ENCODE measurements at regions of chr17 and their contacts with region 1.

Region 1: GRCh38 chr17:28763804-28764266 is 20.0 kb downstream of the TRAF4 start:
- DNase-seq: peak; percentile 58 to 84 (median 76)
- ATAC-seq: peak; percentile 95
- H3K4me3 ChIP-seq: no peak overlapping the region
- H3K4me3 Mint-ChIP-seq: no peak overlapping the region
- H3K27ac ChIP-seq: no peak overlapping the region
- H3K27ac Mint-ChIP-seq: no peak overlapping the region
- H3K4me1 ChIP-seq: no peaks in the 10 kb centered on the region
- H3K4me1 Mint-ChIP-seq: peaks cover 6% of the 10 kb centered on the region
- H3K27me3 ChIP-seq: no peaks in the 10 kb centered on the region
- H3K27me3 Mint-ChIP-seq: no peaks in the 10 kb centered on the region
- CTCF ChIP-seq: peak; percentile 92

Region 2: GRCh38 chr17:28750178-28751047 is 13.4 kb before region 1 on chr17:
- CTCF ChIA-PET with region 1: interaction called, 66 read pairs
- POLR2A ChIA-PET with region 1: no interaction called
- intact Hi-C with region 1: no loop called
- DNase-seq: peak; percentile 69 to 93 (median 89)
- ATAC-seq: peak; percentile 93
- H3K4me3 ChIP-seq: no peak overlapping the region
- H3K4me3 Mint-ChIP-seq: no peak overlapping the region
- H3K27ac ChIP-seq: no peak overlapping the region
- H3K27ac Mint-ChIP-seq: no peak overlapping the region
- H3K4me1 ChIP-seq: peaks cover 15% of the 10 kb centered on the region
- H3K4me1 Mint-ChIP-seq: peaks cover 16% of the 10 kb centered on the region
- H3K27me3 ChIP-seq: no peaks in the 10 kb centered on the region
- H3K27me3 Mint-ChIP-seq: no peaks in the 10 kb centered on the region
- CTCF ChIP-seq: peak; percentile 99

Region 3: GRCh38 chr17:28842282-28843012 is 78.6 kb after region 1 on chr17 and contains the start of gene FAM222B:
- CTCF ChIA-PET with region 1: interaction called, 28 read pairs
- POLR2A ChIA-PET with region 1: interaction called, 3 read pairs
- intact Hi-C with region 1: loop called (anchors 1 to 2 kb)
- DNase-seq: peak; percentile 68 to 94 (median 83)
- ATAC-seq: peak; percentile 98
- H3K4me3 ChIP-seq: peak within 1 kb of the TSS; percentile 62 to 91
- H3K4me3 Mint-ChIP-seq: peak within 1 kb of the TSS; percentile 97
- H3K27ac ChIP-seq: peak within 1 kb of the TSS; percentile 65 to 79
- H3K27ac Mint-ChIP-seq: peak within 1 kb of the TSS; percentile 94
- H3K4me1 ChIP-seq: peaks cover 16% of the 10 kb centered on the region
- H3K4me1 Mint-ChIP-seq: peaks cover 25% of the 10 kb centered on the region
- H3K27me3 ChIP-seq: no peaks in the 10 kb centered on the region
- H3K27me3 Mint-ChIP-seq: no peaks in the 10 kb centered on the region
- CTCF ChIP-seq: no peak
- total RNA-seq, gene FAM222B: 20.2 to 20.6 TPM

Region 4: DNA sequence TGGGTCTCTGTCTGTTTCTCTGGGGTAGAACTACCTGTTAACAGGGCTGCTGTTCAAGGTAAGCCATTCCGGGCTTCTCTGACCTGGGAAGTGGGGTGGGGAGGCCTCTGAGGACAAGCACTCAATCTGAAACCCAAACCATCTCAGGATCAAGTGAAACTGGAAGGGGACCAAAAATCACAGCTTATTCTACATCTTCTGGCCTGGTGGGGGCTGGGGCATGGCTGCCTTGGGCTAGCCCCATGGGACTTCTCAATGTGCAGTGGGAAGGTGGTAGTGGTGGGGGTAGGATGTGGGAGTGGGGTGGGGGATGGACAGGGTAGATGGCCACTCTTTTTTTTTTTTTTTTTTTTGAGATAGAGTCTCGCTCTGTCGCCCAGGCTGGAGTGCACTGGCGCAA is 128.2 kb after region 1 on chr17:
- CTCF ChIA-PET with region 1: interaction called, 95 read pairs
- POLR2A ChIA-PET with region 1: no interaction called
- intact Hi-C with region 1: loop called in 1 of 2 experiments (anchors 5 kb)
- DNase-seq: no peak
- ATAC-seq: no peak
- H3K4me3 ChIP-seq: no peak overlapping the region
- H3K4me3 Mint-ChIP-seq: peak overlapping the region; percentile 54
- H3K27ac ChIP-seq: peak overlapping the region in 1 of 2 experiments; percentile 38
- H3K27ac Mint-ChIP-seq: peak overlapping the region; percentile 85
- H3K4me1 ChIP-seq: peaks cover 43% of the 10 kb centered on the region
- H3K4me1 Mint-ChIP-seq: peaks cover 60% of the 10 kb centered on the region
- H3K27me3 ChIP-seq: no peaks in the 10 kb centered on the region
- H3K27me3 Mint-ChIP-seq: no peaks in the 10 kb centered on the region
- CTCF ChIP-seq: no peak

Region 5: DNA sequence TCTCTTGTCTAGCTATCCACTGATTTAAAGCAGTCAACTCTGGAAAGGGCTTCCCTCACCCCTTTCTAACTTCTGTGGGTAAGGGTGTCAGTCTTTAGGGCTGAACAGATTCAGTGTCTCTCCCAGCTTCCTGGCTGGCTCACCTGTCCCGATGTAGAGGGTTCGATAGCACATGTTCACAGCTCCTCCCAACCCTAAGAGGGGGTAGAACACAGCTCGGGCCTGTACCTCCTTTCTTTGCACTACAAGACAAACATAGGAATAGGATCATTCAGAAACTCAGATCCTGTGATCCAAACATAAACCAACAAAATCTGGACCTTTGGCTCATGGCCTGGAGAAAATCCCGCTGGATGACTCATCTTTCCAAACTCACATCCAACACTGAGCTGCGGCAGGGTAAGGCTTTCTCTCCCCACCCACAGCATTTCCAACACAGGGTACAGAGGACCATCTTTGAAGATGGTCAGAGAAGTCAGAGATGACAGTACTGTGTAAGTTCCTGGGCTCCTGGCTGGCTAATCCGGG is 144.9 kb after region 1 on chr17:
- CTCF ChIA-PET with region 1: interaction called, 95 read pairs
- POLR2A ChIA-PET with region 1: no interaction called
- intact Hi-C with region 1: loop called in 1 of 2 experiments (anchors 1 kb)
- DNase-seq: no peak
- ATAC-seq: no peak
- H3K4me3 ChIP-seq: no peak overlapping the region
- H3K4me3 Mint-ChIP-seq: no peak overlapping the region
- H3K27ac ChIP-seq: no peak overlapping the region
- H3K27ac Mint-ChIP-seq: no peak overlapping the region
- H3K4me1 ChIP-seq: no peaks in the 10 kb centered on the region
- H3K4me1 Mint-ChIP-seq: peaks cover 1% of the 10 kb centered on the region
- H3K27me3 ChIP-seq: no peaks in the 10 kb centered on the region
- H3K27me3 Mint-ChIP-seq: no peaks in the 10 kb centered on the region
- CTCF ChIP-seq: no peak

Region 6: GRCh38 chr17:28937044-28937729 is 173.4 kb after region 1 on chr17:
- CTCF ChIA-PET with region 1: interaction called, 10 read pairs
- POLR2A ChIA-PET with region 1: interaction called, 3 read pairs
- intact Hi-C with region 1: no loop called
- DNase-seq: no peak
- ATAC-seq: no peak
- H3K4me3 ChIP-seq: no peak overlapping the region
- H3K4me3 Mint-ChIP-seq: no peak overlapping the region
- H3K27ac ChIP-seq: no peak overlapping the region
- H3K27ac Mint-ChIP-seq: peak overlapping the region; percentile 70
- H3K4me1 ChIP-seq: peaks cover 46% of the 10 kb centered on the region
- H3K4me1 Mint-ChIP-seq: peaks cover 87% of the 10 kb centered on the region
- H3K27me3 ChIP-seq: no peaks in the 10 kb centered on the region
- H3K27me3 Mint-ChIP-seq: no peaks in the 10 kb centered on the region
- CTCF ChIP-seq: no peak

Region 7: DNA sequence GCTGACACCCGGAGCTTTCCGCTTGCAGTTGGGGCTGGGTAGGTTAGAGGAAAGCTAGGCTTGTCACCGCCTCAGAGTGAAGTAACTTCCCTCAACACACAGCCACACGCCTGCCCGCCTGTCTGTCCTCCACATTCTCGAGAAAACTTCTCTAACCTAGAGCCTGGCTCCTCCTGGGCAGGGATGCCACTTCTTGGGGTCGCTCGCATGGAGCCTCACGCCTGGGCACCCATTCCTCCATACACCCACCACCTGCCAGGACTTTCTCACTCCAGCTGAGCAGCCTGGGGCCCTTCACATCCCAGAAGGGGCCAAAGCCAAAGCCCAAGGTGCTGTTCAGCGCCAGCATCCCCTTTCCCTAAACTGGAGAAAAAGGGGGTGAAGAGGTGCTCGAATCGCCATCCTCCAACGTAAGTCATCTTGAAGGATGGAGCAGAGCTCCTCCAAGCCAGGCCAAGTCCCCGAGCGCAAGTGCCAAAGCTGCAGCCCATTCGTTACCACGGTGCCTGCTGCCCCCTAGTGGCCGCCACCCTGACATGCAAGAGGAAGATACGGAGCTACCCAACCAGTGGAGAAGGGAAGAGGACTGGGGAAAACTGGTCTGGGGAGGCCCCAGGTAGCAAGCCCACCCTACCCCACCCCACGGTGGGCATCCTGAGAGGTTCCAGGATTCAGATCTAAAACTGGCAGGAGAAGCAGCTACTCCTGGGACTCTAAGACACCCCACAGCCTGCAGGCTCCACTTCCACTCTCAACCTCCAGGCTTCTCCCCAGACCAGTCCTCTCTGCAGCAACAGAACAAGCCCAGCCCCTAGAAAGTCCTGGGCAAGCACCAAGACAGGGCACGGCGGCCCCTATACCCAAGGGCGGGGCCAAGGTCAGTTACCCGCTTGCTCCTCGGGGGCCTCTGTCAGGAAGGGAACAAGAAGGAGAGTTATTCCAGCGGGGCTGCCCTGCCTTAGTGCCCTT is 353.3 kb after region 1 on chr17:
- CTCF ChIA-PET with region 1: no interaction called
- POLR2A ChIA-PET with region 1: no interaction called
- intact Hi-C with region 1: loop called (anchors 1 to 10 kb)
- DNase-seq: peak; percentile 58 to 86 (median 80)
- ATAC-seq: peak; percentile 90
- H3K4me3 ChIP-seq: no peak overlapping the region
- H3K4me3 Mint-ChIP-seq: no peak overlapping the region
- H3K27ac ChIP-seq: no peak overlapping the region
- H3K27ac Mint-ChIP-seq: no peak overlapping the region
- H3K4me1 ChIP-seq: peaks cover 3% of the 10 kb centered on the region
- H3K4me1 Mint-ChIP-seq: peaks cover 2% of the 10 kb centered on the region
- H3K27me3 ChIP-seq: no peaks in the 10 kb centered on the region
- H3K27me3 Mint-ChIP-seq: no peaks in the 10 kb centered on the region
- CTCF ChIP-seq: peak; percentile 94